Calu3 (cell line): ENCODE measurements at regions of chr16 and their contacts with region 1.

Region 1: GRCh38 chr16:30571695-30572600 is at the start of gene ZNF688:
- DNase-seq: peak; percentile 95
- H3K4me3 Mint-ChIP-seq: peak within 1 kb of the TSS; percentile 84
- H3K27ac Mint-ChIP-seq: peak within 1 kb of the TSS; percentile 93
- H3K4me1 Mint-ChIP-seq: peaks cover 35% of the 10 kb centered on the region
- H3K27me3 Mint-ChIP-seq: no peaks in the 10 kb centered on the region
- CTCF ChIP-seq: no peak
- total RNA-seq, gene ZNF688: 11.8 and 13.5 TPM in 2 replicates

Region 2: GRCh38 chr16:30521476-30521872 is 50.5 kb before region 1 on chr16:
- CTCF ChIA-PET with region 1: no interaction called
- intact Hi-C with region 1: no loop called
- DNase-seq: no peak
- H3K4me3 Mint-ChIP-seq: no peak overlapping the region
- H3K27ac Mint-ChIP-seq: no peak overlapping the region
- H3K4me1 Mint-ChIP-seq: peaks cover 12% of the 10 kb centered on the region
- H3K27me3 Mint-ChIP-seq: peaks cover 7% of the 10 kb centered on the region
- CTCF ChIP-seq: no peak

Region 3: DNA sequence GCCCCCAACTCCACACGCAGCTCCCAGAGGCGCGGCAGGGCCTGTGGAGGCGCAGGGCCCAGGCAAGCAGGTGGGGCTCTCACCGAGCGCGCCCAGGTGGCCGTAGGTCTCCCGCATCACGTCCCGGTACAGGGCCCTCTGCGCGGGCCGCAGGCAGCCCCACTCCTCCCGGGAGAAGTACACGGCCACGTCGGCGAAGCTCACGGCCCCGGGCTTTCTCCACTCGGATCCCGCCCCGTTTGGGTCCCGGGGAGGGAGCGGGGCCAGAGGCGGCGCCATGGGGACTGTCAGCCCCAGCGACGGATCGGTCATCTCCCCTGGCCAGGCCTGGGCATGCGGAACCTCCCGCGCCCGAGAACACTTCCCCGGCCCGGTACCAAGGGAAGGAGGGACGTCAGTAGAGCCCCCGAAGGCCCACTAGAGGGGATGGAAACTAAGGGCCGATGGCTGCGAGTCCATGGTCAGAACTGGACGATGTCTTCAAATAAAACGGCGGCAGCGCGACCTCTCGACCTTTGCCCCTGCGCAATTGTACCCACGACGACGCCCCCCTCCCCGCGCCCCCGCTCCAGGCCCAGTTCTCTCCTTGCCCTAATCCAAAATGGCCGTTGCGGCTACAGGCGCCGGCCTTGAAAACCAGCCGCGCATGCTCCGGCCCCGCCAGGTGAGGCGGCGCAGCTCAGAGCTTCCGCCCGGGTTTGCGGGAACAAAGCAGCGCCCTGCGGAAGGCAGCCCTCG is 37.4 kb before region 1 on chr16 and contains the start of gene ZNF747:
- CTCF ChIA-PET with region 1: interaction called, 10 read pairs
- intact Hi-C with region 1: no loop called
- DNase-seq: peak; percentile 91
- H3K4me3 Mint-ChIP-seq: peak within 1 kb of the TSS; percentile 73
- H3K27ac Mint-ChIP-seq: peak within 1 kb of the TSS; percentile 65
- H3K4me1 Mint-ChIP-seq: peaks cover 24% of the 10 kb centered on the region
- H3K27me3 Mint-ChIP-seq: no peaks in the 10 kb centered on the region
- CTCF ChIP-seq: peak; percentile 16
- total RNA-seq, gene ZNF747: 12.3 and 15.4 TPM in 2 replicates

Region 4: GRCh38 chr16:30557957-30558788 is 13.8 kb before region 1 on chr16 and contains the start of gene ZNF764:
- CTCF ChIA-PET with region 1: interaction called, 12 read pairs
- intact Hi-C with region 1: loop called (anchors 1 kb)
- DNase-seq: peak; percentile 98
- H3K4me3 Mint-ChIP-seq: peak within 1 kb of the TSS; percentile 90
- H3K27ac Mint-ChIP-seq: peak within 1 kb of the TSS; percentile 79
- H3K4me1 Mint-ChIP-seq: peaks cover 20% of the 10 kb centered on the region
- H3K27me3 Mint-ChIP-seq: no peaks in the 10 kb centered on the region
- CTCF ChIP-seq: no peak
- total RNA-seq, gene ZNF764: 16.5 and 16.7 TPM in 2 replicates

Region 5: GRCh38 chr16:30585400-30586189 is 13.6 kb after region 1 on chr16 and contains the start of gene ZNF785:
- CTCF ChIA-PET with region 1: interaction called, 4 read pairs
- intact Hi-C with region 1: loop called (anchors 1 kb)
- DNase-seq: peak; percentile 98
- H3K4me3 Mint-ChIP-seq: peak within 1 kb of the TSS; percentile 86
- H3K27ac Mint-ChIP-seq: peak within 1 kb of the TSS; percentile 91
- H3K4me1 Mint-ChIP-seq: no peaks in the 10 kb centered on the region
- H3K27me3 Mint-ChIP-seq: no peaks in the 10 kb centered on the region
- CTCF ChIP-seq: peak; percentile 36
- total RNA-seq, gene ZNF785: 22.2 and 22.9 TPM in 2 replicates

Region 6: DNA sequence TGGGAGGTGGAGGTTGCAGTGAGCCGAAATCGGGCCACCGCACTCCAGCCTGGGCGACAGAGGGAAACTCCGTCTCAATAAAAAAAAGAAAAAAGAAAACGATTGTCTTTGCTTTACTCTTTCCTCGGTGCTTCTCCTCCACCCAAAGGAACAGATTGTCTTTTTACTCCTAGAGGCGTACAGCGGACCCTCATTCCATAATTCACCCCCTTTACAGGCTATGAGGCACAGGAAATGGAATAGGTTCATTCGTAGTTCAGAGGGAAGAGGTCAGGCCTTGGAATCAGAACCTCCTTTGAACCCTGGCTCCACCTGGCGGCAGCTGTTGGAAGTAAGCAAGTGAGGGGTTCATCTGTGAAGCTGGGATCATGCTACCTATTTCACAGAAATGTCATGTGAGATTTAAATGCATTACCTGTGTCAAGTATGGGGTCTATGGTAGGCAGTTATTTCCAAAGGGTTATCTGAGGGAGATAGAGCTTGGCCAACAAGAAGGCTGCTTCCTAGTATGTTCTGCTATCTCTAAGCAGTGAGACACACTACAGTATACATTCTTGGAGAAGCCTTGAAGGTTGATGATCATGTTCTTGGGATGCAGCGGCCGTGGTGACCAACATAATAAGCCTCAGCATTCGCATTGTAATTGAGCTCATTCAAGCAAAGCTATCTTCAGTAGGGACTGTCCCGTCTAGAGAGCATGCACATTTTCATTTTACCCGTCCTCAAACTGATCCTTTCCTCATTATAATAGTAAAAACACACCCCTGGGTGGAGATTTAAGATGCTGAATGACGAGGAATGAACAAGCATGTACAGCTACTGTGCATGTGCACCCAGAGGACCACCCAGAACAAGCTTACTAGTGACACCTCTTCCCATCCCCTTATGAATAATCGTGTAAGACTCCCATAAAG is 56.9 kb after region 1 on chr16:
- CTCF ChIA-PET with region 1: no interaction called
- intact Hi-C with region 1: loop called (anchors 5 kb)
- DNase-seq: peak; percentile 93
- H3K4me3 Mint-ChIP-seq: no peak overlapping the region
- H3K27ac Mint-ChIP-seq: no peak overlapping the region
- H3K4me1 Mint-ChIP-seq: peaks cover 14% of the 10 kb centered on the region
- H3K27me3 Mint-ChIP-seq: peaks cover 6% of the 10 kb centered on the region
- CTCF ChIP-seq: peak; percentile 93